Left ventricle myocardium superior (tissue), 1 donor: ENCODE measurements at regions of chr1 and their contacts with region 1.

Region 1: GRCh38 chr1:108897865-108898720 is 21.3 kb downstream of the GPSM2 start:
- DNase-seq: no peak
- ATAC-seq: peak; percentile 68

Region 2: DNA sequence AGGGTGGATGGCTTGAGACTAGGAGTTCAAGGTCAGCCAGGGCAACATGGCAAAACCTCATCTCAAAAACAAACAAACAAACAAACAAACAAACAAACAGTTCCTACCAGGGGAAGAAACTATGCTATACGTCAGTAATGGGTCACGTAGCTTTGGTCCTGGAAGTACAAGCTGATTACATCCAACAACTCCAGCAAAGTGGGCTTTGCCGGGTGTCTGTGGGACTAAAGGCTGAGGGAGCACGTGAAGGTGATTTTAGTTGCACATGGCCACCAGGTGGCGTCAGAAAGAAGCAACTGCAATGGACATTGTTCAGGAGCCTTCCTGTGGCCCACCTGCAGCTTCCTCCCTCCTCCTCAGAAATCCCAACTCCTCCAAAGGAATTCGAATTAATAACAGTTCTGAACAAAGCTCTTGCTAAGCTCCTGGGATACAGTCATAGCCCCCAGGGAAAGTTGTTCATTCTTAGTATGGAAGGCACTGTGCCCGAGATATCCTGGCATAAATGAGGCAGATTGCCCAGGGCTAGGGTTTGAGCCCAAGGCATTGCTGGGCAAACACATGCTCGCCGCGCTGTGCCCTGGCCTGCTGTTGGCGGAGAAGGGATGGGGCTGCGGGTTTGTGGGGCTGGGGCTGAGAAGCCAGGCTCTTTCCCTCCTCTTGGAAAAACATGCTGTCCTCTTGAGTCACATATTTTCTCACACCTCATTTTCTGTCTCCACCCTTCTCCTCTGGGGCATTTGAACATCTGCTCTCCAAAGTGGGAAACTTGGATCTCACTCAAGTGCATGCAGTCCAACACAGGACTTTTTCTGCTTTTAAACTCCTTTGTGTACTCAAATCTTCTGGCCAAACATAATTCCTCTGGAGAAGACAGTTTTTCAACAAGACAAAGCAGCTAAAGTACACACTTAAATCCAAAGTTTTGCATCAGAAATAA is 69.8 kb before region 1 on chr1:
- intact Hi-C with region 1: loop called (anchors 1 kb)
- DNase-seq: peak; percentile 84
- ATAC-seq: peak; percentile 76